Mammary epithelial cell (primary cell): ENCODE measurements at regions of chr1 and their contacts with region 1.

Region 1: DNA sequence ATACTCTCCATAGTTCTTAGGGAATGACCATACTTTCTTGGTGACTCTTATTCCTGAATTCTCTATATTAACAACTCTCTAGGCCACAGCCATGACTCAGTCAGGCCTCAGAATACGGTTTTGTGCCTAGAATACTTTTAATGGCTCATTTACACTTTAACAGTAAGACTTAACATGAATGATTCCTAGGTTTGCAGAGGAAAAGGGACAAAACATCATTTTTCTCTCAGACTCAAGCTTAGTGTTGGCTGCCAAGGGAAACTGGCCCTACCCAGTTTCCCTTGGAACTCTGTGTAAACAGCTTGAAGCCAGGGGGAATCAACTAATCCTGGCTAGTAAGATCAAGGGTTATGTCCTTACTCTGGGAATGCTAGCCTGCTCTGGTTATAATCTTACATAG is 164.9 kb upstream of the PKN2 start:
- DNase-seq: no peak
- H3K4me3 ChIP-seq: no peak overlapping the region
- H3K27ac ChIP-seq: no peak overlapping the region
- H3K4me1 ChIP-seq: no peaks in the 10 kb centered on the region
- H3K27me3 ChIP-seq: peaks cover 2% of the 10 kb centered on the region
- CTCF ChIP-seq: no peak

Region 2: DNA sequence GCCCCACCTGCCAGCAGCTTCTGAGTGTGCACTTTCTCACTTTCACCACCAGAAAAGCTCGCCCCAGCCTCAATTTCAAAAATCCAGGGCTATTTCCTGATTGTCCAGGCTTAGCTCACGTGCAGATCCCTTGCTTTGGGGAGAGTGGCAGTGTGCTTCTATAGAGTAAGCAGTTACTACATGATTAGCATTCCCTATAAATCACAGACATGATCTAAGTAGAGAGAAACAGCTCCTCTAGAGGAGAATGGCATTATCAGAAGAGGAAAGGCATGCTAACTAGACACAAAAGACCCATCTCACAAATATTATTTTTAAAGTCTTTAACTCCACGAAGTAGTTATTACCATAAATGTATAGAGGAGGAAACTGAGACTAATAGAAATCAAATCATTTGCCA is 291.0 kb before region 1 on chr1:
- CTCF ChIA-PET with region 1: no interaction called
- dilution Hi-C with region 1: no loop called
- in situ Hi-C with region 1: no loop called
- intact Hi-C with region 1: no loop called
- DNase-seq: no peak
- H3K4me3 ChIP-seq: no peak overlapping the region
- H3K27ac ChIP-seq: no peak overlapping the region
- H3K4me1 ChIP-seq: no peaks in the 10 kb centered on the region
- H3K27me3 ChIP-seq: no peaks in the 10 kb centered on the region
- CTCF ChIP-seq: peak in 1 of 2 donors; percentile 9

Region 3: DNA sequence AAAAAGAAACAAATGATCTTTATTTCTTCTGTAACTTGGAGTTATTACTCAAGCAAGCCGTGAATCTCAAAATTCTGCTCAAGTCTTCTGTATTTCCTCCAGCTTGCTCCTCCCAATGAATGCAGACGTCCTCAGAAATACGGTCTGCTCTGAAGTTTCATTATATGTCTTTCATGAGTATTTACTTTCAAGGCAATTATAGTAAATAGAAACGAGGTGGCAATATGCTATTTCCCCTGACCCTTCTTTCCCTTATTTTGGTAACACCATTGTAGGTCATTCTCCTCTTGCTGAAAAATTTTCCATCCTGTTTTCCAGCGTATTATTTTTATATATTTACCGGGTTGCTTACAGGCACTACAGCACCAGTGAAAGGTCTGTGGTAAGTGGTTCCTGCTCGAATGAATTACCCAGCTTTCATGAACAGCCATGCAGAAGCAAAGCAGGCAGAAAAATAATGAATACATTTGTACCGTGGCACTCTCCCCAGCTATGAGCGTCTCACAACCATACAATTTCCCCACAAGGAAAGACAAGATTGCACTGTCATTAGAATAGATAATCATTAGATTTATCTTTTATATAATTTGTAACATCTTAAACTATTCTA is 186.0 kb before region 1 on chr1:
- CTCF ChIA-PET with region 1: no interaction called
- dilution Hi-C with region 1: loop called (anchors 5 kb)
- in situ Hi-C with region 1: no loop called
- intact Hi-C with region 1: no loop called
- DNase-seq: no peak
- H3K4me3 ChIP-seq: no peak overlapping the region
- H3K27ac ChIP-seq: no peak overlapping the region
- H3K4me1 ChIP-seq: no peaks in the 10 kb centered on the region
- H3K27me3 ChIP-seq: peaks cover 2% of the 10 kb centered on the region
- CTCF ChIP-seq: no peak